Heart left ventricle (tissue), 16 donors: ENCODE measurements at regions of chr19 and their contacts with region 1.

Region 1: DNA sequence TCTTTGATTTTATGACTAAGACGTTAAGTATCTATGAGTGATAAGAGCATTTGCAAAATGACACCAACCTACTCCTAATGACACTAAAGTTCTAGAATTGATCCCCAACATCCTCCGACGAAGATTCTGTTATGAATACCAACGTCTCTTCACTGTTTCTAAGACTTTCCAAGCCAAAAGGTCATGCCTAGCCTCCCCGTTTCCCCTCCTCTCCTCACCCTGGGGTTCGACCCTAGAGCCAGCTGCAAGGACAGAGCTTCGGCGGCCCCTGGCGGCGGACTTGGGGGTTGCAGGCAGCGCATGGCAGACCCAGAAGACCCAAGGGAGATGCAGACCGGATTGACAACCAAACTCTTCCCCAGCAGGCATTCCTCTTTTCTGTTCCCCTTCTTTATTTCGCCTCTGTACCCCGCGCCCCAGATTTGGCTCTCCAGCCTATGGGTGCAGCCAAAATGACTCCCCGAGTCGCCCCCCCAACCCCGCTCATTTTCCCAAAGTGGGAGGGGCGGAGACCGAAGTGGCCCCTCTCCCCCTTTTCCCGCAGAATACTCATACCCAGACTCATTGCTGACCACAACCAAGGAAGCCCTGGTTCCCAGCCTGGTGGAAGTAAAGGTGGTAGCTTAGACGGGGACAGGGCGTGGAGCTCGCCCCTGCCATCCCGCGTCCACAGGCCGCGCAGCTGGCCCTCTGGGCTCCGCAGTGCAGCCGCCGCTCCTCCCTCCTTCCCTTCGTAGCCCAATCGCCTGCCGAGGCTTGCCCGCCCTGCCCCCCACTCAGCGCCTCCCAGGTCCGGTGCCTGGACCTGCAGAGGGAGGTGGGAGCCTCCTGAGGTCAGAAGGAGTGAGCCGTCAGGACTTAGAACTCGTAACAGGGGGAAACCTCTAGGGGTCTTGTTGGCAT is 4.1 kb upstream of the EML2 start:
- DNase-seq: peak; percentile 81 to 93 (median 85)
- ATAC-seq: peak; percentile 46 to 62 (median 52)
- H3K4me3 ChIP-seq: peak overlapping the region in 5 of 12 donors; percentile 24 to 62 (median 60)
- H3K27ac ChIP-seq: peak overlapping the region in 2 of 12 donors; percentile 84 to 89
- H3K4me1 ChIP-seq: peaks cover 0 to 65% (median 35%) of the 10 kb centered on the region in 12 donors
- H3K27me3 ChIP-seq: peaks cover 0 to 16% (median 0%) of the 10 kb centered on the region in 9 donors
- CTCF ChIP-seq: peak; percentile 92 to 99 (median 98)
- POLR2A ChIP-seq: no peak

Region 2: DNA sequence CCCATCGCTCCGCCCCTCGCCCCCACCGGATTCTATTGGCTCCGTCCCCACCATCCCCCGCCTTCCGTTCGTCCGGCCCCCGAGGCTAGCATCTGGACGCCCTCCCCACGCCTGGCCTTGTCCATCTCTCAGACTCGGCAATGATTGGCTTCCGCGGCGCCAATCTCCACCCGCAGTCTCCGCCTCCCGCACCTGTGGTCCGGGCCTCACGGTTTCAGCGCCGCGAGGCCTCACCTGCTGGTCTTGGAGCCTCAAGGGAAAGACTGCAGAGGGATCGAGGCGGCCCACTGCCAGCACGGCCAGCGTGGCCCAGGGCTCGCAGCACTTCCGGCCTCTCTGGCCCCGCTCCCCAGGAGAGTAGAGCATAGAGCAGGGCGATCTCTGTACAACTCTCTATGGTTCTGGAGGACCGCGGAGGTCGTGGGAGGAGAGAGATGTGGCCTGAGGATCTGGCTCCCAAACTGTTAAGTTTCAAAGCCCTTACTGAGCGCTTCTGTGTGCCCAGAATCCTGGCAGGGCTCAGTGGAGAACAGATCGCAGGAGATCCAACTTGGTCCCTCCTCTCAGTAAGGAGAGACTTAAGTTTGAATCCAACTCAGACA is 219.6 kb before region 1 on chr19 and contains the start of gene ERCC1:
- intact Hi-C with region 1: loop called in 1 of 10 experiments (anchors 10 kb)
- DNase-seq: peak; percentile 94 to 97 (median 95)
- ATAC-seq: peak; percentile 76 to 89 (median 86)
- H3K4me3 ChIP-seq: peak within 1 kb of the TSS; percentile 38 to 83 (median 70)
- H3K27ac ChIP-seq: peak within 1 kb of the TSS; percentile 66 to 98 (median 92)
- H3K4me1 ChIP-seq: peaks cover 2 to 73% (median 32%) of the 10 kb centered on the region in 12 donors
- H3K27me3 ChIP-seq: peaks cover 0 to 4% (median 0%) of the 10 kb centered on the region in 9 donors
- CTCF ChIP-seq: no peak
- POLR2A ChIP-seq: peak in 1 of 2 donors; percentile 29
- total RNA-seq, gene ERCC1: 104 to 156 (median 121) TPM

Region 3: GRCh38 chr19:45496349-45496953 is 146.8 kb before region 1 on chr19:
- intact Hi-C with region 1: loop called in 3 of 10 experiments (anchors 5 to 10 kb)
- DNase-seq: peak in 4 of 5 donors; percentile 59 to 81 (median 64)
- ATAC-seq: peak in 2 of 4 donors; percentile 28 to 44
- H3K4me3 ChIP-seq: peak overlapping the region; percentile 57 to 98 (median 78)
- H3K27ac ChIP-seq: peak overlapping the region in 8 of 12 donors; percentile 10 to 67 (median 50)
- H3K4me1 ChIP-seq: peaks cover 7 to 67% (median 34%) of the 10 kb centered on the region in 12 donors
- H3K27me3 ChIP-seq: peaks cover 0 to 25% (median 9%) of the 10 kb centered on the region in 9 donors
- CTCF ChIP-seq: no peak
- POLR2A ChIP-seq: no peak

Region 4: DNA sequence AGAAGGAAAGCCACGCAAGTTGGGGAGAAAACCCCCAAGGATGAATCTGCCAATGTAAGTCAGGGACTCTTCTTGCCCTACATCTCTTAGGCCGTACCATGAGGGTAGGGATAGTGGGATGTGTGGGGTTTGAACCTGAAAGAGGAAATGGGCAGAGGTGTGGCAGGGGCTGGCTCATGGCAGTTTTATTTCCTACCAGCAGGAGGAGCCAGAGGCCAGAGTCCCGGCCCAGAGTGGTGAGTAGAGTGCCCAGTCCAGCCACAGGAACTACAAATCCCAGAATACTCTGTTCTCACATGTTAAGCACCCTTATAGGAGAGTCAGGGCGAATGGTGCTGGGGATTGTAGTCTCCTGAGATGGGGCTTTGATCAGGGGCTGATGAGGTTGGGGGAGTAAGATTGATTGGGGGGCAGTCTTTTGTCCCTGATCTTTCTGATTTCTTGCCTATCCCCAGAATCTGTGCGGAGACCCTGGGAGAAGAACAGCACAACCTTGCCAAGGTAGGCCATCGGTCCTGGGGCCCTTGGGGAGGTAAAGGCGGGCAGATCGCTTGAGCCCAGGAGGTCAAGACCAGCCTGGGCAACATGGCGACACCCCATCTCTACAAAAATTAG is 119.5 kb before region 1 on chr19:
- intact Hi-C with region 1: loop called (anchors 1 to 5 kb)
- DNase-seq: peak; percentile 77 to 85 (median 78)
- ATAC-seq: peak; percentile 90 to 94 (median 94)
- H3K4me3 ChIP-seq: no peak overlapping the region
- H3K27ac ChIP-seq: peak overlapping the region in 8 of 12 donors; percentile 23 to 74 (median 58)
- H3K4me1 ChIP-seq: peaks cover under 1 to 50% (median 11%) of the 10 kb centered on the region in 12 donors
- H3K27me3 ChIP-seq: no peaks in the 10 kb centered on the region
- CTCF ChIP-seq: peak; percentile 82 to 97 (median 90)
- POLR2A ChIP-seq: no peak

Region 5: DNA sequence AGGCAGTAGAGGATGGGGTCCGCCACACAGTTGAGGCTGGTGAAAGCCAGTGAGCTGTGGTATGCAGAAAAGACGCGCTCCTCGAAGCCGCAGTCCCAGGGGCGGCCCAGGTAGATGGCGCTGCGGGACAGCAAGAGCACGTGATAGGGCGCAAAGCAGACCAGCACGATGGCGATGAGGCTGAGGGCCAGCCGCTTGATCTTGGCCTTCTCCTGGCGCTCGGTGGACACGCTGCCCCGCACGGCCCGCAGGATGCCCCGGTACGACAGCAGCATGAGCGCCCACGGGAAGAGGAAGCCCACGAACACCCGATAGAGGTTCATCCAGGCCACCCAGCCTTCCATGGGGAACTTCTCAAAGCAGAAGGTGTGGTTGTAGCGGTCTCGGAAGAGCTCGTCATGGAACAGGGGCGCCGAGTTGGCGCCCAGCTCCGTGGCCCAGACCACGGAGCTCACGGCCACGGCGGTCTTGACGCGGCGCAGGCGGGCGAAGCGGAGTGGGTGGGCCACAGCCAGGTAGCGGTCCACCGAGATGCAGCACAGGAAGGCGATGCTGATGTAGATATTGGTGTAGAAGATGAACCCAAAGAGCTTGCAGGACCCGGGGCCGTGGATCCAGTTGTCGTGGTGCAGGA is 52.2 kb before region 1 on chr19:
- intact Hi-C with region 1: loop called in 7 of 10 experiments (anchors 5 to 10 kb)
- DNase-seq: peak in 1 of 5 donors; percentile 73
- ATAC-seq: peak; percentile 23 to 53 (median 46)
- H3K4me3 ChIP-seq: no peak overlapping the region
- H3K27ac ChIP-seq: no peak overlapping the region
- H3K4me1 ChIP-seq: peaks cover 0 to 16% (median 3%) of the 10 kb centered on the region in 12 donors
- H3K27me3 ChIP-seq: peaks cover 0 to 23% (median 4%) of the 10 kb centered on the region in 9 donors
- CTCF ChIP-seq: peak in 5 of 12 donors; percentile 12 to 29 (median 18)
- POLR2A ChIP-seq: no peak

Region 6: GRCh38 chr19:45615795-45616708 is 27.2 kb before region 1 on chr19:
- intact Hi-C with region 1: loop called in 1 of 10 experiments (anchors 2 kb)
- DNase-seq: peak; percentile 79 to 88 (median 83)
- ATAC-seq: peak; percentile 84 to 96 (median 96)
- H3K4me3 ChIP-seq: peak overlapping the region in 7 of 12 donors; percentile 17 to 33 (median 24)
- H3K27ac ChIP-seq: peak overlapping the region in 9 of 12 donors; percentile 2 to 64 (median 26)
- H3K4me1 ChIP-seq: peaks cover 0 to 26% (median 4%) of the 10 kb centered on the region in 12 donors
- H3K27me3 ChIP-seq: no peaks in the 10 kb centered on the region
- CTCF ChIP-seq: no peak
- POLR2A ChIP-seq: no peak

Region 7: GRCh38 chr19:45681391-45682015 is 38.2 kb after region 1 on chr19:
- intact Hi-C with region 1: no loop called
- DNase-seq: peak; percentile 78 to 91 (median 86)
- ATAC-seq: peak; percentile 86 to 91 (median 88)
- H3K4me3 ChIP-seq: peak overlapping the region; percentile 3 to 55 (median 47)
- H3K27ac ChIP-seq: peak overlapping the region in 11 of 12 donors; percentile 29 to 82 (median 61)
- H3K4me1 ChIP-seq: peaks cover 0 to 33% (median 15%) of the 10 kb centered on the region in 12 donors
- H3K27me3 ChIP-seq: peaks cover 10 to 33% (median 27%) of the 10 kb centered on the region in 9 donors
- CTCF ChIP-seq: peak; percentile 91 to 99 (median 98)
- POLR2A ChIP-seq: peak in 1 of 2 donors; percentile 42

Region 8: GRCh38 chr19:45827459-45828093 is 184.3 kb after region 1 on chr19:
- intact Hi-C with region 1: no loop called
- DNase-seq: peak in 1 of 5 donors; percentile 36
- ATAC-seq: no peak
- H3K4me3 ChIP-seq: no peak overlapping the region
- H3K27ac ChIP-seq: no peak overlapping the region
- H3K4me1 ChIP-seq: peaks cover 0 to 8% (median 0%) of the 10 kb centered on the region in 12 donors
- H3K27me3 ChIP-seq: no peaks in the 10 kb centered on the region
- CTCF ChIP-seq: no peak
- POLR2A ChIP-seq: no peak